ENCODE measurements at regions of chr3 and their contacts with region 1.

Region 1: GRCh38 chr3:73007992-73008712 is 11.5 kb downstream of the PPP4R2 start:
- DNase-seq: no peak
- H3K4me3 Mint-ChIP-seq: no peak overlapping the region
- H3K27ac Mint-ChIP-seq: peak overlapping the region; percentile 9
- H3K4me1 Mint-ChIP-seq: peaks cover 83% of the 10 kb centered on the region
- H3K27me3 Mint-ChIP-seq: no peaks in the 10 kb centered on the region

Region 2: GRCh38 chr3:73018790-73019441 is 10.8 kb after region 1 on chr3:
- CTCF ChIA-PET with region 1: no interaction called
- POLR2A ChIA-PET with region 1: interaction called, 5 read pairs
- intact Hi-C with region 1: loop called (anchors 1 kb)
- DNase-seq: no peak
- H3K4me3 Mint-ChIP-seq: no peak overlapping the region
- H3K27ac Mint-ChIP-seq: peak overlapping the region; percentile 5
- H3K4me1 Mint-ChIP-seq: peaks cover 66% of the 10 kb centered on the region
- H3K27me3 Mint-ChIP-seq: no peaks in the 10 kb centered on the region